ENCODE measurements at regions of chr1 and their contacts with region 1.

Region 1: GRCh38 chr1:91282695-91283420 is 121.8 kb downstream of the HFM1 start:
- DNase-seq: peak; percentile 71
- ATAC-seq: peak; percentile 83
- H3K4me3 ChIP-seq: no peak overlapping the region
- H3K27ac ChIP-seq: no peak overlapping the region
- H3K4me1 ChIP-seq: peaks cover 2 to 7% of the 10 kb centered on the region in 2 experiments; a peak in 2 of 4 replicates
- H3K27me3 ChIP-seq: no peaks in the 10 kb centered on the region
- CTCF ChIP-seq: peak; percentile 71 to 82 (median 80)
- POLR2A ChIP-seq: no peak
- RAD21 ChIP-seq: peak; percentile 90

Region 2: DNA sequence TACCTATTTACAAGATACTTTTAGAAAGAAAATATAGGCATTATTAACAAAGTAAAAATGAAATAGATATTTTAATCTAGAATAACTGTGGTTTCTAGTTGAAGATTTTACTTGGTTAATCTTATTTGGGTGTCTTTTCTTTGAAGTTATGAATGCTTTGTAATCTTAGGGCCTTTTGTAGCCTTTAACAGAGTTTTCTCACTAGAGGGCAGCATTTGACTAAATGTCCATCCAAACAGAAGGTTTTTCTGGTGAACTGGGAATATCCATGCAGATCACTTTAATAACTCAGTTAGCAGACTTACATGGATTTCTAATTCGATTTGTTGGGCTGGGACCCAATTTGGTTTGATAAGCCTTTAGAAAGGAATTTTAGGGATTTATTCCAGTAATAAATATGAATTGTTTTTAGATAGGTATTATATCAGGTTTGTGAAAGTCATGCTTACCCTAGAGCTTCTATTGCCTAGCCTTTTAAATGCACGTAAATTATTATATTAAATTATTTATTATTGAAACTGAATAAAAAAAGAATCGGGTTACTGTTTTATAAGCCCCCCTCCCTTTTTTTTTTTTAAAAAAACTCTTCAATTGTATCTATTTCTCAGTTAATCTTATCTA is 1168.2 kb before region 1 on chr1:
- CTCF ChIA-PET with region 1: interaction called, 3 read pairs
- POLR2A ChIA-PET with region 1: no interaction called
- RAD21 ChIA-PET with region 1: no interaction called
- intact Hi-C with region 1: loop called (anchors 1 kb)
- DNase-seq: peak; percentile 56
- ATAC-seq: peak; percentile 74; the same call in 1 of the 2 replicates
- H3K4me3 ChIP-seq: no peak overlapping the region
- H3K27ac ChIP-seq: no peak overlapping the region
- H3K4me1 ChIP-seq: no peaks in the 10 kb centered on the region
- H3K27me3 ChIP-seq: peaks cover 44% of the 10 kb centered on the region
- CTCF ChIP-seq: peak; percentile 53 to 81 (median 69); a peak in 5 of 6 replicates
- POLR2A ChIP-seq: no peak
- RAD21 ChIP-seq: peak; percentile 75

Region 3: DNA sequence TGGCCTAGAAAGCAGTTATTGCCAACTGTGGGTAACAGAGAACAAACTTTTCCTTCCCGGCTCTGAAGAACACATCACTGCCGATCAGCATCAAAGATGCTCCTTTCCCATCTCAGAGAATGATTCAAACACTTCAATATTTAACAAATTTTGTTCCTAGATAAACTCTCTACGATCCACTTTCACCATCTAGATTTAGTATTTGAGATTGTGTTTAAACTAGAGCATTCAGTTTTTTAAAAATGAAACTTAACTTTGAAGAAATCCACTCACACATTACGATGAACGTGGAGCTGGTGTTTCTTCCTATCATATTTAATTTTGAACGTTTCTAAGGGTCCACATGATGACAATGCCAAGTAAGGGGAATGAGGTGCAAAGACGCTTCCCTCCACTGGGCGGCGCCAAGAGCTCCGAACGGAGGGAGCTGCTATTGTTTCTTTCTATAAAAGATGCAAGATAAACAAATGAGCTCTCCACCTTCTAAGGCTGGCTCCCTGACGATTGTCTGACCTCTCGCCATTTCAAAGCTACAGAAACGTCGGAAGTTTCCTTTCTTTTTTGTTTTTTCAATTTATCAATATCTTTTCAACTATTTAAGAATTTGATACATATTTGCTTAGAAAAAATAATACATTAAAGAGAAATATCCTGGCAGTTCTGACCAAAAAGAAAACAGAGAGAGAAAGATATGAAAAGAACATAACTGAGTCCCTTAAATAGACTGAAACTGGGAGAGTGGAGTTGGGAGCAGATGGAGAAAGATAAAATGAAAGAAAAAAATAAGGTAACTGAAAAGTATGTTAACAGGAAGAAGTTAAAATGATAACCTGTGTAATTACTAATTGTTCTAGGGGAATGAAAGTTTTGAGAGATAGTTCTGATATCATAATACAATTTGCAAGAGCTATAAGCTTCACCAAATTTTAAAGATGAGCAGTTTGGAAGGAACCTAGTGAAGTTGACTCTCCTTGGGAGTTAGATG is 561.4 kb before region 1 on chr1:
- CTCF ChIA-PET with region 1: interaction called, 10 read pairs
- POLR2A ChIA-PET with region 1: no interaction called
- RAD21 ChIA-PET with region 1: no interaction called
- intact Hi-C with region 1: loop called (anchors 5 kb)
- DNase-seq: peak; percentile 52
- ATAC-seq: peak; percentile 94
- H3K4me3 ChIP-seq: no peak overlapping the region
- H3K27ac ChIP-seq: no peak overlapping the region
- H3K4me1 ChIP-seq: peaks cover 0 to 5% of the 10 kb centered on the region in 2 experiments; a peak in 1 of 4 replicates
- H3K27me3 ChIP-seq: no peaks in the 10 kb centered on the region
- CTCF ChIP-seq: peak; percentile 83 to 93 (median 92)
- POLR2A ChIP-seq: no peak
- RAD21 ChIP-seq: peak; percentile 81

Region 4: DNA sequence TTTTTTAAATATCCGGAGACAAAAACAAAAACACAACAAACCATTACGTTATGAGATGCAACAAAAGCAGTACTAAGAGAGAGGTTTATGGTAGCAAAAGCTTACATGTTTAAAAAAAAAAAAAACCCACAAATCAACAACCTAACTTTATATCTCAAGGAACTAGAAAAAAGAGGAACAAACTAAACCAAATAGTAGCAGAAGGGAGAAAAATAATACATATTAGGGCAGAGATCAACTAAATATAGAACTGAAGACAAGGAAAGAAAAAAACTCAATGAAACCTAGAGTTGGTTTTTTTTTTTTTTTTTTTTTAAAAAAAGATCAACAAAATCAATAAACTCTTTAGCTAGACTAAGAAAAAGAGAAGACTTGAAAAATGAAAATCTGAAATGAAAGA is 295.9 kb before region 1 on chr1:
- CTCF ChIA-PET with region 1: no interaction called
- POLR2A ChIA-PET with region 1: no interaction called
- RAD21 ChIA-PET with region 1: no interaction called
- intact Hi-C with region 1: no loop called
- DNase-seq: no peak
- ATAC-seq: no peak
- H3K4me3 ChIP-seq: no peak overlapping the region
- H3K27ac ChIP-seq: no peak overlapping the region
- H3K4me1 ChIP-seq: no peaks in the 10 kb centered on the region
- H3K27me3 ChIP-seq: no peaks in the 10 kb centered on the region
- CTCF ChIP-seq: no peak
- POLR2A ChIP-seq: no peak
- RAD21 ChIP-seq: no peak

Region 5: DNA sequence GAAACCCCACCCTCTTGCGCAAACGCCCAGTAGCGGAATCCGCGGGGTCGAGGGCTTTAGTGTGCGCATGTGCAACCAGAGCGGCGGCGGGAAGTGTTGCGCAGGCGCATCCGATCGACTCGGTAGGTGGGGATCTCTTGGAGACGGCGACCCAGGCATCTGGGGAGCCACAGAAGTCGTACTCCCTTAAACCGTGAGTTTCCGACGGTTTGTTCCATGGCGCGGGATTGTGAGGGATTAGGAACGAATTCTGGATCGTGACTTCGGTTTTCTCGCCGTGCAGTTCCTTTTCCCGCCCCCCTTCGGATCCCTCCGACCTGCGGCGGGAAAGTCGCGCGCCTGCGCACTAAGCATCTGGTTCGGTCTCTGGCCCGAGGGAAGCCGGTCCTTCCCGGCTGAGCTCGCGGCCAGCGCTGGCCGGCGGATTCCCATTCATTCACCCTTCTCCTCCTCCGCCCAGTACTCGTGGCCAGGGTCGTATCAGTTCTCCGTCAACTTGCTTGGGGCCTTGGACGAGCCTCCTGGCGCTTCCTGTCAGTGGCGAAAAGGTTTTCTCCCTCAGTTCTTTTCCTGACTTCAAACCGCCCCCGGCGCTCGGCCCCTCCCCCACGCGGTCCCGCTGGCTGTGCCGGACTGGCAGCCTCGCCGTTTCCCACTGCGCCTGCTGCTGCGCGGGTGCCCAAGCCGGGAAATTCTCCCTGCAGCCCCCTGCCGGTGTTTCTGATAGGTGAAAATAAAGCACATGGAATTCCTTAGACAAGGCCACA is 218.1 kb after region 1 on chr1 and contains the start of gene CDC7:
- CTCF ChIA-PET with region 1: interaction called, 3 read pairs
- POLR2A ChIA-PET with region 1: no interaction called
- RAD21 ChIA-PET with region 1: no interaction called
- intact Hi-C with region 1: loop called (anchors 1 kb)
- DNase-seq: peak; percentile 85
- ATAC-seq: peak; percentile 89
- H3K4me3 ChIP-seq: peak within 1 kb of the TSS; percentile 61 to 63
- H3K27ac ChIP-seq: peak within 1 kb of the TSS; percentile 90
- H3K4me1 ChIP-seq: peaks cover 7 to 27% of the 10 kb centered on the region in 2 experiments
- H3K27me3 ChIP-seq: no peaks in the 10 kb centered on the region
- CTCF ChIP-seq: peak in 2 of 3 experiments; percentile 35 to 38; a peak in 5 of 6 replicates
- POLR2A ChIP-seq: peak; percentile 48
- RAD21 ChIP-seq: 0 out of 2 replicates have a peak, but pooled peaks have one; percentile 35
- total RNA-seq, gene CDC7: 24.5 TPM

Region 6: GRCh38 chr1:92298573-92299476 is 1016.0 kb after region 1 on chr1 and contains the starts of genes GLMN and RPAP2:
- CTCF ChIA-PET with region 1: no interaction called
- POLR2A ChIA-PET with region 1: no interaction called
- RAD21 ChIA-PET with region 1: no interaction called
- intact Hi-C with region 1: loop called (anchors 10 kb)
- DNase-seq: peak; percentile 72
- ATAC-seq: peak; percentile 99
- H3K4me3 ChIP-seq: peak within 1 kb of the TSS; percentile 89 to 92
- H3K27ac ChIP-seq: peak within 1 kb of the TSS; percentile 86
- H3K4me1 ChIP-seq: peaks cover 0 to 9% of the 10 kb centered on the region in 2 experiments; a peak in 2 of 4 replicates
- H3K27me3 ChIP-seq: no peaks in the 10 kb centered on the region
- CTCF ChIP-seq: no peak; a peak in 1 of 6 replicates
- POLR2A ChIP-seq: peak; percentile 85
- RAD21 ChIP-seq: no peak
- total RNA-seq, gene GLMN: 10.9 TPM
- total RNA-seq, gene RPAP2: 28.1 TPM

Measured in HCT116 (cell line).